Activated T-helper 1 cell treated with anti-CD3 and anti-CD28 coated beads, Interleukin-12 subunit alpha, Interleukin-12 subunit beta, Interleukin-2, Interleukin-4 antibody, amounts not matched to agents 30 ng/mL and 10 ng/mL and 1 ng/mL, durations not matched to agents 14 hours and 24 hours and 36 hours (primary cell): ENCODE measurements at regions of chr5 and their contacts with region 1.

Region 1: DNA sequence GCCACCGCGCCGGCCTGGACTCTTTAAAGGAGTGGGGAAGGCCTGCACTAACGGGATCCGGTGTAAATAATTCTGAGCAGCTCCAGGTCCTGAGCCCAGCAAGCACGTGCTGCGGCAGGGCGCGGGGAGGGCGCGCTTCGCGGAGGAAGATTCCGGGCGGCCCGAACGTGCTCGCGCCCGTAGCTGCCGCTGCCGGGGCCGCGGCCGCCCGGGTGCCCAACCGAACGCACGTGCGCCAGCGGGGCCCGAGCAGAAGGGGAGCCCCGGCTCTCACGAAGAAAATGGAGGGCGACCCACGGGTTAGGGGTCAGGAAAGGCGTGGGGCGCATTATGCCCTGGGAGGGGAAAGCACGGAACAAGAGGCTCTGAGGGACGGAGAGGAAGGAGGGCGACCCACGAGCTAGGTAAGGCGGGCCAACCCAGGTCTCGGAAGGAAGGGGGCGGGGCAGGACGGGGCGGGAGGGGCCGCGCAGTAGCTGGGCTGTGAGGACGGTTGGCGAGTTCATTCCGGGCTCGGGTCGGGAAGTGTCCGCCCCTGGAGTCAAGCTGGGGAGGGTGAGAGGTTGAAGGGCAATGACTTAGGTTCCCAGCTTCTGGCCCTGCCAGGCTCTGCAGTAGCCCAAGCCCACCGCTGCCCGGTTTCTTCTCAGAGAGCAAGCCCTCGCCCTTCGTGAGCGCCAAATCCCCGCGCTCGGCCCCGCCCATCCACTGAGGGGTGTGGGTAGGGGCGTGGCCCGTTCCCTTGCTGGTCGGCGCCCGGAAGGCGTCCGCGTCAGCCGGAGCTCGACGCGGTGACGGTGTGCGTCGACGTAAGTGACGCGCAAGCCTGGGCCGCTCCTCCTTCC is at the start of gene ZNF131:
- DNase-seq: peak; percentile 96
- H3K4me3 Mint-ChIP-seq: peak within 1 kb of the TSS; percentile 95
- H3K27ac Mint-ChIP-seq: peak within 1 kb of the TSS; percentile 98
- H3K4me1 Mint-ChIP-seq: peaks cover 42% of the 10 kb centered on the region
- H3K27me3 Mint-ChIP-seq: peaks cover 2% of the 10 kb centered on the region
- total RNA-seq, gene ZNF131: 38.3 and 40.2 TPM in 2 replicates

Region 2: GRCh38 chr5:42994246-42995151 is 126.4 kb before region 1 on chr5:
- intact Hi-C with region 1: loop called (anchors 1 kb)
- DNase-seq: peak; percentile 84
- H3K4me3 Mint-ChIP-seq: peak overlapping the region; percentile 98
- H3K27ac Mint-ChIP-seq: peak overlapping the region; percentile 100
- H3K4me1 Mint-ChIP-seq: peaks cover 60% of the 10 kb centered on the region
- H3K27me3 Mint-ChIP-seq: peaks cover 3% of the 10 kb centered on the region

Region 3: DNA sequence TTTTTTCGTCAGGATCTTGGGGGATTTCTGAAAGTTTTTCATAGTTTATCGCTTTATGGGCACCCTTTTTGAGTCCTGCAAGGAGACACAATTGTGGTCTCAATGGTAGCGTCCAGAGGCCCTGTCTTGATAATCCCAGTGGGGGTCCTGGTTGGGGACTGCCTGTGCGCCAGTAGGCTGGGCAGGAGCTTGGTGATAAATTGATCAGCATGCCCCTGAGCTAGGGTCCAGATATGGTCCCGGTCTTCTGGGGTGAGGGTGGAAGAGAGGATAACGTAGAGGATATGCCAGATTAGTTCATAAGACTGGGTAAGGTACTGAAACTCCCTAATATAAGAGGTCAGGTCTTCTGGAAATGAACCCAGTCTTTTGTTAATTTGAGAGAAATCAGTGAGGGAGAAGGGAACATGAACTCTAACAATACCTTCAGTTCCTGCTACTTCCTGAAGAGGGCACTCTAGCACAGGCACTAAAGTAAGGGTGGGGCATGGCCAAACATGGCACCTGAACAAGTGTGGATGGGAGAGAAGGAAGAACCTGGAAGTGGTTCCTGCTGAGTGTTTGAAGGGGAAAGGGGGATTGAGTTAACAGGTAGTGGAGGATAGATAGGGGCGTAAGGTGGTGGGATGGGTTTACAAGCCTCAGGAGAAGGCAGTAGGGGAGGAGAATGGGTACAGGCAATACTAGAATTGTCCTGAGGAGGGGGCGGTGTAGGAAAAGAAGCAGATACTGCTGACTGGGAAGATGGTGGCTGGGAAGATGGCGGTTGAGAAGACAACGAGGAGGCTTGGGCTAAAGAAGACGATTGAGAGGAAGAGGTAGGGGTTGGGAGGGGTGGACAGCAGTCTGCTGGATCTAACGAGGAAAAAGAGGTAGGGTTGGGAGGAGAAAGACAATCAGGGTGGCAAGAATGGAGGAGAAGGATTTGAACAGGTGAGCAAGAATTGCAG is 47.1 kb before region 1 on chr5:
- intact Hi-C with region 1: loop called (anchors 1 kb)
- DNase-seq: peak; percentile 42
- H3K4me3 Mint-ChIP-seq: no peak overlapping the region
- H3K27ac Mint-ChIP-seq: peak overlapping the region; percentile 41
- H3K4me1 Mint-ChIP-seq: peaks cover 45% of the 10 kb centered on the region
- H3K27me3 Mint-ChIP-seq: no peaks in the 10 kb centered on the region

Region 4: DNA sequence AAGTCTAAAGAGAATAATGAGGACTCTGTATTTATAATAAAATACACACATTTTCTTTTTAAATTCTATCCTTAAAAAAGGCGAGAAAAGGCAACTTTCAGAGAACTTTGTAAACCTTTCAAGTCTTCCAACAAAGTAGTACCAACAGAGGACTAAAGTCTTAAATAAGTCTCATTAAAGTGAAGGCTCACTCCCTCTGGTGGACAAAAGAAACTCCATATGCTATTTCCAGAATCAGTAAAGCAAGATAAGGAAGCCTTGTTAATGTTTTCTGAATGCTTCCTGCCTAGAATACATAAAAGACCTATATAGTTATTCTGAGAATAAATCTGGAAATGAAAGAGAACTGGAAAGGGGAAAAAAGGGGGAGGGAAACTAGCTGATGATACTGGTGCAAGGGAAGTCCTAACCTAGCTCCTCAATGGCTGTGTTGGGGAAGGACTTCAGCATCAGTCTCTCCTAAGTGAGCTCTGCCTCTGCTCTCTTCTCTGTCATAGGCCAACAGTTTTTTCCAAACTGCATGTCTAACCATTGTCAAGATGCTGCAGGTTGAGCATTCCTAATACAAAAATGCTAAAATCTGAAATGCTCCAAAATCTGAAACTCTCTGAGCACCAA is 185.1 kb after region 1 on chr5:
- intact Hi-C with region 1: loop called (anchors 1 kb)
- DNase-seq: no peak
- H3K4me3 Mint-ChIP-seq: peak overlapping the region; percentile 33
- H3K27ac Mint-ChIP-seq: peak overlapping the region; percentile 61
- H3K4me1 Mint-ChIP-seq: peaks cover 87% of the 10 kb centered on the region
- H3K27me3 Mint-ChIP-seq: no peaks in the 10 kb centered on the region

Region 5: GRCh38 chr5:43556857-43557542 is 436.1 kb after region 1 on chr5 and contains the start of gene PAIP1:
- intact Hi-C with region 1: loop called (anchors 1 kb)
- DNase-seq: peak; percentile 83
- H3K4me3 Mint-ChIP-seq: peak within 1 kb of the TSS; percentile 92
- H3K27ac Mint-ChIP-seq: peak within 1 kb of the TSS; percentile 93
- H3K4me1 Mint-ChIP-seq: peaks cover 10% of the 10 kb centered on the region
- H3K27me3 Mint-ChIP-seq: no peaks in the 10 kb centered on the region
- total RNA-seq, gene PAIP1: 59.0 and 60.8 TPM in 2 replicates